Activated B cell treated with CpG ODN at 0.5 μM for 24 hours (primary cell): ENCODE measurements at regions of chr17 and their contacts with region 1.

Region 1: DNA sequence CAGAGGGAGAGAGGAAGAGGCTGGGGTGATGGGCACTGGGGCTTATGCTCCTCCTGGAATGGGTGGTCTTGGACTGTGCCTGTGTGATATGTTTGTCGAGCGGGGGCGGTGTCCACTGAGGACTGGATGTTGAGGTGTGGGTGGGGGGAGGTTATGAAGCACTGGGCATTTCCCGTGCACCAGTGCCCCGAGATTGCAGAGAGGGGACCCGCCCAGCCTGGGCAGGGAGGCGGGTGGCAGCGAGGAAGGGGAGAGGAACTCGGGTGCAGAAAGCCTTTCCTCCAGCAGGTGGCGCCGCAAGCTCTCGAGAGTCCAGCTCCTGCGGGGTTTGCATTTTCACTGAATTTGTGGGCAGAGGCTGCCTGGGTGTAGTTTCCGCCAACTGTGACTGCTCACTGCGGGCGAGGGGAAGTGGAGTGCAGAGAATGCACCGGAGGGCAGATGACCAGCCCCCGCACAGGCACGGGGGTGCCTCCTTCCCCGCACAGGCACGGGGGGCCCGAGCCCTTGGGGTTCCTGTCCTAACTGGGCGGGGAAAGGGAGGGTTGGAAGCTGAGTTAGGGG is 190.6 kb downstream of the SEC14L1 start:
- DNase-seq: peak; percentile 90
- ATAC-seq: peak; percentile 91
- H3K4me3 Mint-ChIP-seq: peak overlapping the region; percentile 76
- H3K27ac Mint-ChIP-seq: peak overlapping the region; percentile 78
- H3K4me1 Mint-ChIP-seq: peaks cover 57% of the 10 kb centered on the region
- H3K27me3 Mint-ChIP-seq: no peaks in the 10 kb centered on the region
- CTCF ChIP-seq: peak; percentile 32

Region 2: GRCh38 chr17:77266891-77267341 is 64.5 kb before region 1 on chr17:
- CTCF ChIA-PET with region 1: no interaction called
- POLR2A ChIA-PET with region 1: no interaction called
- intact Hi-C with region 1: no loop called
- DNase-seq: no peak
- ATAC-seq: no peak
- H3K4me3 Mint-ChIP-seq: no peak overlapping the region
- H3K27ac Mint-ChIP-seq: no peak overlapping the region
- H3K4me1 Mint-ChIP-seq: no peaks in the 10 kb centered on the region
- H3K27me3 Mint-ChIP-seq: peaks cover 8% of the 10 kb centered on the region
- CTCF ChIP-seq: no peak

Region 3: GRCh38 chr17:77345260-77345910 is 14.0 kb after region 1 on chr17:
- CTCF ChIA-PET with region 1: interaction called, 4 read pairs
- POLR2A ChIA-PET with region 1: interaction called, 8 read pairs
- intact Hi-C with region 1: loop called (anchors 1 kb)
- DNase-seq: no peak
- ATAC-seq: no peak
- H3K4me3 Mint-ChIP-seq: no peak overlapping the region
- H3K27ac Mint-ChIP-seq: no peak overlapping the region
- H3K4me1 Mint-ChIP-seq: peaks cover 32% of the 10 kb centered on the region
- H3K27me3 Mint-ChIP-seq: no peaks in the 10 kb centered on the region
- CTCF ChIP-seq: no peak

Region 4: DNA sequence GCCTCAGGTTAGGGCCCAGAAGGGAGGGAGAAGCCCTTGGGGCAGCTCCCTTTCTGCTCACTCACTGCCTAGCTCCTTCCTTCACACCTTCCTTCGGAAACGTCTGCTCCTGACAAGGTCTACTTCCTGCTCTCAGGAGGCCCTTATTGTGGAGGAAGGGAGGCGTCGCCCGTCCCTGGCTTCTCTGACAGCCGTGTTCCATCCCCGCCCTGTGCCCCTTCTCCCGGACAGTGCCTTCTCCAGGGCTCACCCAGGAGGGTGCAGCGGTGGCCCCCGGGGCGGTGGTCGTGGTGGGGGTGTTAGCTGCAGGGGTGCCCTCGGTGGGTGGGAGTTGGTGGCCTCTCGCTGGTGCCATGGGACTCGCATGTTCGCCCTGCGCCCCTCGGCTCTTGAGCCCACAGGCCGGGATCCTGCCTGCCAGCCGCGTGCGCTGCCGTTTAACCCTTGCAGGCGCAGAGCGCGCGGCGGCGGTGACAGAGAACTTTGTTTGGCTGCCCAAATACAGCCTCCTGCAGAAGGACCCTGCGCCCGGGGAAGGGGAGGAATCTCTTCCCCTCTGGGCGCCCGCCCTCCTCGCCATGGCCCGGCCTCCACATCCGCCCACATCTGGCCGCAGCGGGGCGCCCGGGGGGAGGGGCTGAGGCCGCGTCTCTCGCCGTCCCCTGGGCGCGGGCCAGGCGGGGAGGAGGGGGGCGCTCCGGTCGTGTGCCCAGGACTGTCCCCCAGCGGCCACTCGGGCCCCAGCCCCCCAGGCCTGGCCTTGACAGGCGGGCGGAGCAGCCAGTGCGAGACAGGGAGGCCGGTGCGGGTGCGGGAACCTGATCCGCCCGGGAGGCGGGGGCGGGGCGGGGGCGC is 41.3 kb after region 1 on chr17:
- CTCF ChIA-PET with region 1: interaction called, 9 read pairs
- POLR2A ChIA-PET with region 1: interaction called, 7 read pairs
- intact Hi-C with region 1: loop called (anchors 1 kb)
- DNase-seq: peak; percentile 67
- ATAC-seq: peak; percentile 70
- H3K4me3 Mint-ChIP-seq: peak overlapping the region; percentile 70
- H3K27ac Mint-ChIP-seq: no peak overlapping the region
- H3K4me1 Mint-ChIP-seq: peaks cover 46% of the 10 kb centered on the region
- H3K27me3 Mint-ChIP-seq: no peaks in the 10 kb centered on the region
- CTCF ChIP-seq: no peak

Region 5: GRCh38 chr17:77451245-77451893 is 120.0 kb after region 1 on chr17:
- CTCF ChIA-PET with region 1: no interaction called
- POLR2A ChIA-PET with region 1: interaction called, 87 read pairs
- intact Hi-C with region 1: no loop called
- DNase-seq: peak; percentile 65
- ATAC-seq: peak; percentile 59
- H3K4me3 Mint-ChIP-seq: peak overlapping the region; percentile 95
- H3K27ac Mint-ChIP-seq: peak overlapping the region; percentile 99
- H3K4me1 Mint-ChIP-seq: peaks cover 82% of the 10 kb centered on the region
- H3K27me3 Mint-ChIP-seq: no peaks in the 10 kb centered on the region
- CTCF ChIP-seq: no peak

Region 6: GRCh38 chr17:77528516-77529327 is 197.3 kb after region 1 on chr17:
- CTCF ChIA-PET with region 1: no interaction called
- POLR2A ChIA-PET with region 1: no interaction called
- intact Hi-C with region 1: no loop called
- DNase-seq: no peak
- ATAC-seq: peak; percentile 31
- H3K4me3 Mint-ChIP-seq: peak overlapping the region; percentile 15
- H3K27ac Mint-ChIP-seq: no peak overlapping the region
- H3K4me1 Mint-ChIP-seq: peaks cover 3% of the 10 kb centered on the region
- H3K27me3 Mint-ChIP-seq: peaks cover 30% of the 10 kb centered on the region
- CTCF ChIP-seq: no peak

Region 7: GRCh38 chr17:78013683-78014467 is 682.5 kb after region 1 on chr17:
- CTCF ChIA-PET with region 1: interaction called, 15 read pairs
- POLR2A ChIA-PET with region 1: no interaction called
- intact Hi-C with region 1: loop called (anchors 1 kb)
- DNase-seq: no peak
- ATAC-seq: peak; percentile 54
- H3K4me3 Mint-ChIP-seq: no peak overlapping the region
- H3K27ac Mint-ChIP-seq: no peak overlapping the region
- H3K4me1 Mint-ChIP-seq: peaks cover 2% of the 10 kb centered on the region
- H3K27me3 Mint-ChIP-seq: no peaks in the 10 kb centered on the region
- CTCF ChIP-seq: peak; percentile 52